Naive thymus-derived CD4-positive, alpha-beta T cell (primary cell): ENCODE measurements at regions of chr11 and their contacts with region 1.

Region 1: DNA sequence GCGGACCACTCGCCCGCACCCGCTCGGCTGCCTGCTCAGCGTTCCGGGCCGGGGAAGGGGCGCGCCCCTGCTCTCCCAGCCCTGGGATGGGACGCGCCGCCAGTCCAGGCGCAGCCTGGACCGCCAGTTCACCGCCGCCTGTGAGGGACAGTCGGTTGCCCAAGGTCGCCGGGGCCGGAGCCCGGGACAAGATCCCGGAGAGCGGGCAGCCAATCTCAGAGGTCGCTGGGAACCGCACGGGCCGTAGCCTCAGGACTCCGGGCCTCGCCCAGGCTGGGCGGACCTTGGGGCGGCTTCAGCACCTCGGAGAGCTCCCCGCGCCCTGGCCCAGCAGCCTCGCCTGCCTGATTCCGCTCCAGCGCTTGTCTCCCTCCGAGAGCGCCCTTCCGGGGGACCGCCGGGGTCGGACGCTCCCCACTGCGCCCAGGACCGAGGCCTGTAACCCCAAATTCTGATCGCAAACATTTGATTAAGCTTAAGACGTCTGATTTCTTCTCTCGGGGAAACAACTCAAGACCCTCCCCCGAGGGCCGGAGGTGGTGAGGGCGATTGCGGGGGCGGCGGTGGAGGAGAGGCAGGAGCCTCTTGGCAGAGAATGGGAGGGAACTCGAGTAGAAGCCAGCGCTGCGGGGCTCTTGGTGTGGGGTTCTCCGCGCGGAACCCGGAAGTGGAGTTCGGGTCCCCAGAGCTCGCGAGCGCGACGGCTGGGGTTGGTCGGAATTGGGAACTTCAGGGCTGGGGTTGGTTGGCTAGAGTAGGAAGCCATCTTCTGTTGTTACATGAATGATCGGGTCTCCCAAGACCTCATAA is 1.1 kb upstream of the CHRM4 start:
- DNase-seq: peak; percentile 63 to 91 (median 75)
- ATAC-seq: peak; percentile 90
- H3K4me3 ChIP-seq: peak overlapping the region; percentile 35
- H3K4me3 Mint-ChIP-seq: peak overlapping the region; percentile 70 to 84 (median 78)
- H3K27ac ChIP-seq: no peak overlapping the region
- H3K27ac Mint-ChIP-seq: peak overlapping the region in 3 of 9 donors; percentile 54 to 81 (median 73)
- H3K4me1 ChIP-seq: peaks cover 14 to 21% of the 10 kb centered on the region in 2 donors
- H3K4me1 Mint-ChIP-seq: peaks cover 7 to 35% (median 25%) of the 10 kb centered on the region in 7 donors
- H3K27me3 ChIP-seq: peaks cover 0 to 21% of the 10 kb centered on the region in 2 donors
- H3K27me3 Mint-ChIP-seq: peaks cover 26 to 45% (median 36%) of the 10 kb centered on the region in 5 donors

Region 2: DNA sequence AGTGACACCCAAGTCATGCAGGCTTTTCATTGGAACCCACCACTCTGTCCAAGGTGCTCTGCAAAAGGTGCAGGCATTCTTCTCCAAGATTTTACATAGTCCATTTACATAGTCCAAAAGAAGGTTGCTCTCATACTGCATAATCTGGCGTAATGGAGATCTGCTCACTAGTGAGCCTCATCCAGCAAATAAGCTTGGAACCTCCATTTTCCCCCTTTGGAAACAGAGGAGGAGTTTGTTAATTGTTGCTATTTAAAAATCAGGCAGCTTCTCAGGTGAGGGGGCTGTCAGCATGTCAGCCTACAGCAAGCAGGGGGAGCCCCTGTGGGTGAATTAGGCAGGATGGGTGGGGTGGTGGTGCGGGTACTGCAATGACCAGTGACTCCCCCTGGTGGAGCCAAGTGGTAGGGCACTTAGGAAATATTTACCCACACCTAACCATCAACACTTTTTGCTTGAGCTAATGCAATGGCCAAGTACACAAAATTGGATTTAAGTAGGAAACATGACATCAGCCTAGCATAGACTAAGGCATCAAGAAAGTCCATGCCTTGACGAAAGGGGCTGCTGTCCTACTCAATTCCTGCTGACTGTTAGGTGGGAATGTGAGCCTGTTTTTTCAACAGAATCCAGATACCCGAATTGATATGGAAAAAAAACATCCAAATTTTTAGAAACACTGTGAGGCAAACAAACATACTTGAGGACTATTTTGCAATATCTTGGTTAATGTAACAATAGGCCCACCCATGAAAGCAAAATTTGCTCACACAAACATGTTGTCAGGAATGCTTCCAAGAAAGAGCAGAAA is 136.7 kb after region 1 on chr11:
- CTCF ChIA-PET with region 1: no interaction called
- POLR2A ChIA-PET with region 1: no interaction called
- intact Hi-C with region 1: loop called (anchors 1 to 2 kb)
- DNase-seq: peak; percentile 39 to 75 (median 68)
- ATAC-seq: peak; percentile 99
- H3K4me3 ChIP-seq: no peak overlapping the region
- H3K4me3 Mint-ChIP-seq: no peak overlapping the region
- H3K27ac ChIP-seq: no peak overlapping the region
- H3K27ac Mint-ChIP-seq: peak overlapping the region in 1 of 9 donors; percentile 65
- H3K4me1 ChIP-seq: peaks cover 0 to 8% of the 10 kb centered on the region in 2 donors
- H3K4me1 Mint-ChIP-seq: peaks cover 17 to 49% (median 38%) of the 10 kb centered on the region in 7 donors
- H3K27me3 ChIP-seq: no peaks in the 10 kb centered on the region
- H3K27me3 Mint-ChIP-seq: no peaks in the 10 kb centered on the region

Region 3: GRCh38 chr11:46675288-46675851 is 282.7 kb after region 1 on chr11:
- CTCF ChIA-PET with region 1: no interaction called
- POLR2A ChIA-PET with region 1: no interaction called
- intact Hi-C with region 1: loop called in 1 of 2 experiments (anchors 10 kb)
- DNase-seq: no peak
- ATAC-seq: no peak
- H3K4me3 ChIP-seq: no peak overlapping the region
- H3K4me3 Mint-ChIP-seq: peak overlapping the region in 7 of 10 donors; percentile 18 to 74 (median 67)
- H3K27ac ChIP-seq: peak overlapping the region; percentile 63
- H3K27ac Mint-ChIP-seq: peak overlapping the region; percentile 85 to 96 (median 91)
- H3K4me1 ChIP-seq: peaks cover 49 to 69% of the 10 kb centered on the region in 2 donors
- H3K4me1 Mint-ChIP-seq: peaks cover 45 to 77% (median 70%) of the 10 kb centered on the region in 7 donors
- H3K27me3 ChIP-seq: no peaks in the 10 kb centered on the region
- H3K27me3 Mint-ChIP-seq: no peaks in the 10 kb centered on the region